Left cardiac atrium (tissue), 4 donors: ENCODE measurements at regions of chr19 and their contacts with region 1.

Region 1: DNA sequence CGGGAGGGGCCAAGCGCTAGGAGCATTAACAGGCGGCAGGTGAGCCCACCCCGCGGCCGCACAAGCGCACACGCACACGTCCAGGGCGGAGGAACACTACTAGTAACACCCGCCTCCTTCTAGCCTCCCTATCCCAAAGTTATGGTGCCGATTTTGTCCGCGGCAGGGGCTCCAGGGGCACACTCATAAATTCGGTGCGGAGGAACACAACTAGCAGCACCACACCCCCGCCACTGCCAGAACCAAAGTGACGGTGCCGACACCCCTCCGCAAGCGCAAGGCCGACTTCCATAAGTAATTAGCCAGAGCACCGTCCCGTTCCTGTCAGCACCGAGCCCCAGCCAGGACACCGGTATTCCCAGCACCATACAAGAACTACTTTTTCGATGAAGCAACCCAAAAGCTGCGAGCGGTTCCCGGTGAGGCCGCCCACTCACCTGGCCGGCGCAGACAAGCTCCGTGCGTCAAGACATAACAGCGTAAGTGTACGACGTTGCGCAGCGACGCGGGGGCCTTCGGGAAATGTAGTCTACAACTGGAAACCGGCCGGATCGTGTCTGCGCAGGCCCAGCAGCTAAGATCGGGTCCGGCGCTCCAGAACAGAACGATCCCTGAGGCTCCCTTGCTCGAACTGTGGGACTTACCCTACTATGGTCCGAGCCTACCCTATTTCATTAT is at the starts of genes ZNF540 and ZNF571:
- DNase-seq: peak; percentile 97
- ATAC-seq: peak; percentile 99 to 100
- total RNA-seq, gene ZNF540: 5.3 to 7.4 TPM
- total RNA-seq, gene ZNF571: 3.4 to 4.5 TPM

Region 2: GRCh38 chr19:37519890-37520289 is 74.6 kb before region 1 on chr19:
- intact Hi-C with region 1: no loop called
- DNase-seq: no peak
- ATAC-seq: no peak

Region 3: DNA sequence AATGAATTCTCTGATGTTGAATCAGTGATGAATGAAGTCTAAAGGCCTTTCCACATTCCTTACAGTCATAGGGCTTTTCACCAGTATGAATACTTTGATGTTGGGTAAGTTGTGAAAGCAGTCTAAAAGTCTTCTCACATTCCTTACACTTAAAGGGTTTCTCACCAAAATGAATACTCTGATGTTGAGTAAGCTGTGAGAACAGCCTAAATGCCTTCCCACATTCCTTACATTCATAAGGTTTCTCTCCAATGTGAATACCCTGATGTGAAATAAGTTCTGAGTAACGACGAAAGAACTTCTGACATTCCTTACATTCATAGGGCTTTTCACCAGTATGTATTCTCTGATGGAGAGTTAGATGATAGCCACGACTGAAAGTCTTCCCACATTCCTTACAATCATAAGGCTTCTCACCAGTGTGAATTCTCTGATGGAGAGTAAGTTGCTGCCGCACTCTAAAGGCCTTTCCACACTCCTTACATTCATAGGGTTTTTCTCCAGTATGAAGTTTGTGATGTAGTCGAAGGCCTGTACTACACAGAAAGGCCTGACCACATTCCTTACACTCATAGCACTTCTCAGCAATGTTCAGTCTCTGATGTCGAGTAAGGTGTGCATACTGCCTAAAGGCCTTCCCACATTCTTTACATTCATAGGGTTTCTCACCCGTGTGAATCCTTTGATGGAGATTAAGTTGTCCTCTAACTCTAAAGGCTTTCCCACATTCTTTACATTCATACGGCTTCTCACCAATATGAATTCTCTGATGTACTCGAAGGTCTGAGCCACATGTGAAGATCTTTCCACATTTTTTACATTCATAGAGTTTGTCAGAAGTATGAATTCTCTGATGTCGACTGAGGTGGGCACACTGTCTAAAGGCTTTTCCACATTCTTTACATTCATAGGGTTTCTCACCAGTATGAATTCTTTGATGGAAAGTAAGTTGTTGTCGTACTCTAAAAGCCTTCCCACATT is 40.9 kb after region 1 on chr19:
- intact Hi-C with region 1: no loop called
- DNase-seq: no peak
- ATAC-seq: no peak

Region 4: GRCh38 chr19:37655689-37656371 is 61.4 kb after region 1 on chr19:
- intact Hi-C with region 1: loop called in 1 of 2 experiments (anchors 10 kb)
- DNase-seq: peak; percentile 89
- ATAC-seq: peak; percentile 80 to 91

Region 5: GRCh38 chr19:37699127-37699526 is 104.7 kb after region 1 on chr19:
- intact Hi-C with region 1: no loop called
- DNase-seq: no peak
- ATAC-seq: no peak

Region 6: GRCh38 chr19:37725181-37725580 is 130.7 kb after region 1 on chr19:
- intact Hi-C with region 1: no loop called
- DNase-seq: no peak
- ATAC-seq: no peak